Psoas muscle (tissue), 8 donors: ENCODE measurements at regions of chr10 and their contacts with region 1.

Region 1: GRCh38 chr10:92290837-92291615 is at the starts of genes CPEB3 and MARCHF5:
- DNase-seq: peak; percentile 96 to 98
- ATAC-seq: peak; percentile 96 to 99 (median 98)
- H3K4me3 ChIP-seq: peak within 1 kb of the TSS; percentile 90
- H3K27ac ChIP-seq: peak within 1 kb of the TSS; percentile 95
- H3K4me1 ChIP-seq: peaks cover 5% of the 10 kb centered on the region
- H3K27me3 ChIP-seq: no peaks in the 10 kb centered on the region
- CTCF ChIP-seq: peak; percentile 78
- total RNA-seq, gene CPEB3: 6.1 to 16.9 (median 14.3) TPM
- total RNA-seq, gene MARCHF5: 28.3 to 52.3 (median 32.9) TPM

Region 2: DNA sequence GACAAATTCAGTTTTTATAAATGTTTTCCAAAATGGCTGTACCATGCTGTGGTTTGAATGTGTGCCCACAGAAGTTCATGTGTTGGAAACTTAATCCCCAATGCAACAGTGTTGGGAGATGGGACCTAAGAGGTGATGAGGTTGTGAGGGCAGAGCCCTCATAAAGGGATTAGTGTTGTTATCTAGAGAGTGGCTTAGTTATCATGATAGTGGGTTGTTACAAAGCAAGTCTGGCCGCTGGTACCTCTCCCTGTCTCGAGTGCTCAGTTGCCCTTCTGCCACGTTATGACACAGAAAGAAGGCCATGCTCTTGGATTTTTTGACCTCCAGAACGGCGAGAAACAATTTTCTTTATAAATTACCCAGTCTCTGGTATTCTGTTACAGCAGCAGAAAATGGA is 248.5 kb before region 1 on chr10:
- intact Hi-C with region 1: no loop called
- DNase-seq: no peak
- ATAC-seq: no peak
- H3K4me3 ChIP-seq: no peak overlapping the region
- H3K27ac ChIP-seq: no peak overlapping the region
- H3K4me1 ChIP-seq: no peaks in the 10 kb centered on the region
- H3K27me3 ChIP-seq: no peaks in the 10 kb centered on the region
- CTCF ChIP-seq: no peak

Region 3: DNA sequence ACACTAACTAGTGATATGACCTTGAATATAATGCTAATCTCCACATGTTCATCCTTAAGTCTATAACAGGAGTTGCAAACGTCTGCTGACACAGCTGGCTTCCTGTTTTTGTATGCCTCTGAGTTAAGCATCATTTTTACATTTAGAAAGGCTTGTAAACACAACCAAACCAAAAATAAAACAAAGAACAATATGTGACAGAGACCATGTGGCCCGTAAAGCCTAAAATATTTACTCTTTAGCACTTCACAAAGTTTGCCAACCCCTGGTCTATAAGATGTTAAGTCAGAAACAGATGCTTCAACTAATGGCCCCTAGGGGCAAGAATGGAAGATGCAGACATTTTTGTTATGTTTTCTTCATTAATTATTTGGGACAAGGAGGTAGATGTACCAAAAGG is 109.5 kb before region 1 on chr10:
- intact Hi-C with region 1: no loop called
- DNase-seq: no peak
- ATAC-seq: no peak
- H3K4me3 ChIP-seq: no peak overlapping the region
- H3K27ac ChIP-seq: no peak overlapping the region
- H3K4me1 ChIP-seq: peaks cover 15% of the 10 kb centered on the region
- H3K27me3 ChIP-seq: no peaks in the 10 kb centered on the region
- CTCF ChIP-seq: no peak

Region 4: DNA sequence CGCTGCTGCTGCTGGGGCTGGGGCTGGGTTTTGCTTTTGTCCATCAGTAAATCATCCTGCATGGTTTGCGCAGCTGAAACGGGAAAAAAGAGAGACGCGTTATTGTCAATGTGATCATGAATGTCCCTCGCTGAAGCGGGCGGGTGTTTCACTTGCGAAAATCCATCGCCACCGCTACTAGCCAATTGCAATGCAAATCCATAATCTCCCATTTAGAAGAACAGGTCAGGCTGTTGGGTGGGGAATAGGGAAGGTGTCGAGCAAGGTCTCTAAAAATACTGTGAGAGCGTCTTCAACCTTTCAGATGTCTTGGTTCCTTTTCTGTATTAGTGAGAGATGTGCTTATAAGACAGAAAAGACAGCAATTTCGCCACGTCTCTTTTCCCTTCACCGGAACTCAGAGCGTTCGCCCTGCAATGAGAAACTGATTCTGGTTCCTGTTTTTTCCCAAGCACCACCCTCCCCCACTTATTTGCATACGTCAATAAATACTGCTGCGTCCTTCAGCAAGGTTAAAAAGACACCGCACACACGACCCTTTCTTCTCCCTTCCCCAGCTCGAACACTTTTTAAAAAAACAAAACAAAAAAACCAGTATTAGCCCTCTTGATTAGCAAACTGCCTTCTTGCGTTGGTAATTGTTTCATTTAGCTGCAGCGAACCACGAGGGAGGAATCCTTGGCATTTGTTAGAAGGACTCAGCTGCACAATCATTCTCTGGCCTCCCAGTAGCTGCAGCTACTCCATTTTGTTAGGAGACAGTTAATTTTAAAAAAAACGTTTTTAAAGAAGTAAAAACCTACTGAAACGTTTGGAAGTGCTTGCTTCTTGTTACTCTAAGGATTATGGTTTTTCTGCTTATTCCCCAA is 50.5 kb before region 1 on chr10:
- intact Hi-C with region 1: loop called (anchors 2 to 5 kb)
- DNase-seq: peak; percentile 26 to 54
- ATAC-seq: peak; percentile 48 to 75 (median 65)
- H3K4me3 ChIP-seq: peak overlapping the region; percentile 79
- H3K27ac ChIP-seq: peak overlapping the region; percentile 92
- H3K4me1 ChIP-seq: peaks cover 42% of the 10 kb centered on the region
- H3K27me3 ChIP-seq: no peaks in the 10 kb centered on the region
- CTCF ChIP-seq: no peak

Region 5: DNA sequence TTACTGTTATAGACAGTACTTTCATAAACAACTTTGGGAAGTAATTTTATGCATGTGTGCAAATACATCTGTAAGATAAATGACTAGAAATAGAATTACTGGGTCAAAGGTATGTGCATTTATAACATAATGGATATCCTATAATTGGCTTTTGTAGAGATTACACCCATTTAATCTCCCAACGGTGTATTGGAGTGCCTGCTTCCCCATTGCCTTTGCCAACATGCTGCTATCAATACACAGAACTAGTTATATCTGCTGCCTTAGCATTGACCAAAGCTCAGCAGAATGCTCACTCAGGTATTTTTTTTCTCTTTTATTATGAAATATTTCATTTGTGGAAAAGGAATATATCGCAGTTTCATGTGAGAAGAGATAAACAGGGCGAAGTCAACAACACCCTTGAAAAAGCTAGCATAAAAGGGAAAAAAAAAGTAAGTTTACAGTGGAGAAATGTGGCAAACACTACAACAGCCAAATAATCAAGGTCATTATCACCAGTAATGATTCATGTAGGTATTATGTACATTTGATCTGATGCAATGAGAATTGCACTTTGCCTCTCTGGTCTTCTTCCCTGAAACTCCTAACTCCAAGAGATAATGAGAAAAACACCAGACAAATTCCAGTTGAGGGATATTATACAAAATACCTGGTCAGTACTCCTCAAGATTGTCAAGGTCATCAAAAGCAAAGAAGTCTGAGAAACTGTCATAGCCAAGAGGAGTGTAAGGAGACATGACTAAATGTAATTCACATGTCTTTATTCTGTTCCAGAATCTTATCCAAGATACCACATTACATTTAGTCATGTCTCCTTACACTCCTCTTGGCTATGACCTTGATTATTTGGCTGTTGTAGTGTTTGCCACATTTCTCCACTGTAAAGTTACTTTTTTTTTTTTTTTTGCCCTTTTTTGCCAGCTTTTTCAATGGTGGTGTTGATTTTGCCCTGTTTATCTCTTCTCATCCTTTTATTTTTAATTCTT is 36.7 kb after region 1 on chr10:
- intact Hi-C with region 1: loop called in 1 of 2 experiments (anchors 5 kb)
- DNase-seq: no peak
- ATAC-seq: peak in 3 of 4 donors; percentile 55 to 68 (median 59)
- H3K4me3 ChIP-seq: no peak overlapping the region
- H3K27ac ChIP-seq: no peak overlapping the region
- H3K4me1 ChIP-seq: peaks cover 25% of the 10 kb centered on the region
- H3K27me3 ChIP-seq: no peaks in the 10 kb centered on the region
- CTCF ChIP-seq: no peak